IMR-90 (cell line): ENCODE measurements at regions of chr6 and their contacts with region 1.

Region 1: DNA sequence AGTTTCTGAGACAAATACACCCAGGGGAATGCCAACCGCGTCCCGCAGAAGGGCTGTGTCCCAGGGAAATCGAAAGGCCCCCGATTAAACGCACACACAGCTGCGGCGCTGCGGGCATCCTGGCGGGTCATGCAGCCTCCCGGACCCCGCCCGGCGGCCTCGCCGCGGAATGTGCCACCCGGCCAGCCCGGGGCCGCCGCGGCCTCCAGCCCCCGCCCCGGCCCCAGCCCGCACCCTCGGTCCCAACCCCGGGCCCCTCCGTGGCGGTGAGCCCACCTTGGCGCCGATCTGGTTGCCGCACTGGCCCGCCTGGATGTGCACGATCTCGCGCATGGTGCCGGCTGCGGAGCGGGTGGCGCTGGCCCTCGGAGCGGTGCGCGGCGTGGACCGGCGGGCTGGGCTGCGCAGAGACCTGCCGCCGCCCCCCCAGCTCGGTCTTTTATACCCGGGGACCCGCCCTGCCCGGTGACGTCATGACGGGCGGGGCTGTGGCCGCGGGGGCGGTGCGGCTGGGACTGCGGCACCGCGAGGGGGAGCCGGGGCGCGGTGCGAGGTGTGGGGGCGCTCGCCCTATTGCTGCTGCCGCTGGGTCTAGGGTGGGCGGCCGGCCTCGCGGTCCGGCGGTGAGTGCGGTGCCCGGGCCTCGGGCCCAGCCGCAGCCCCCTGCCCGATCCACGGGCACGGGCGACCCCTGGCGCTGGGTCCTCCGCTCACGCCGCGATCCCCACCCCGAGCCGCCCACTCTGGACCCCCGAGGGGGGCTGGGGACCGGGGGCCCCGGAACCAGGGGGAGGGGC is at the start of gene TUBB2A:
- DNase-seq: peak; percentile 78
- ATAC-seq: peak; percentile 90
- H3K4me3 ChIP-seq: peak within 1 kb of the TSS; percentile 99
- H3K27ac ChIP-seq: peak within 1 kb of the TSS; percentile 60
- H3K4me1 ChIP-seq: peaks cover 2% of the 10 kb centered on the region; the same call in 1 of the 2 replicates
- H3K27me3 ChIP-seq: no peaks in the 10 kb centered on the region
- CTCF ChIP-seq: peak; percentile 85
- POLR2A ChIP-seq: peak; percentile 99
- RAD21 ChIP-seq: peak; percentile 62
- total RNA-seq, gene TUBB2A: 164 and 182 TPM in 2 replicates

Region 2: DNA sequence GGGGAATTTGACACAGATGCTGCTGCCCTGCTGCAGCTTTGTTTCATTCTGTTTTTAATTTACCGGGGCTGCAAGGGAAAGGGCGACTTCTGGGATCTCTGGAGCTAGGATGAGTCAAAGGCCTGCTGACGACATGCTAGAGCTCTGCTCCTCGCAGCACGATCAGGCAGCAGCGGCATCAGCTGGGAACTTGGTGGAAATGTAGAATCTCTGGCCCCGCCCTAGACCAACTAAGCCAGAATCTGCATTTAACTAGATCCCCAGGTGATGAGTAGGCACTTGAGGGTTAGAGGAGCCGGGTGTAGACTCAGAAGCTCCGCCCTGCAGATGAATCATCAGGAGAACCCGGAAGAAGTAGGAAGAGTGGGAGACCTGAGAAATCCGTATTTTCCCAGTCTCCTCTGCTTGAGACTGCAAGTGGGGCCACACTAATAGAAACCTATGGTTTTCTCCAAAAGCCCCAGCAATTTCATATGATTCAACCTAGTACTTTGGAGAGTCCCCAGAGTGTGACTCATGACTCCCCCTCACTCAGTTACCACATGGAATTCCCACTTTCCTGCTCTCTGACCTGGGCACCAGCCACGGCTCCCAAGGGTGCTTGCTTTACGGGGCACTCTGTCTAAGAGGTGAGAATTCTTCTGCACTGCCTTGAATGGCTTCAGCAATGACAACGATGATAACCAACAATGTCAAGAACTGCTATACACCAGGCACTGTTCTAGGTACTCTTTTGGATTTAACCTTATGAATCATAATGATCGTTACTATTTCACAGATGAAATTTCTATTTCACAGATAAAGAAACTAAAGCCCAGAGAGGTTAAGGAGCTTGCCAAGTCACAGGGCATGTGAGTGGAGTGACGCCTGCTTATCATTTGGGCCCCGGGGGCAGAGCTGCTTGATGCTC is 52.0 kb after region 1 on chr6:
- CTCF ChIA-PET with region 1: interaction called, 3 read pairs
- POLR2A ChIA-PET with region 1: no interaction called
- dilution Hi-C with region 1: no loop called
- in situ Hi-C with region 1: no loop called
- intact Hi-C with region 1: loop called (anchors 1 kb)
- DNase-seq: peak; percentile 98
- ATAC-seq: peak; percentile 82
- H3K4me3 ChIP-seq: no peak overlapping the region
- H3K27ac ChIP-seq: peak overlapping the region; percentile 33; the same call in 1 of the 2 replicates
- H3K4me1 ChIP-seq: peaks cover 18% of the 10 kb centered on the region
- H3K27me3 ChIP-seq: no peaks in the 10 kb centered on the region
- CTCF ChIP-seq: peak; percentile 54
- POLR2A ChIP-seq: peak; percentile 66
- RAD21 ChIP-seq: peak; percentile 68